ENCODE measurements at regions of chr9 and their contacts with region 1.

Region 1: DNA sequence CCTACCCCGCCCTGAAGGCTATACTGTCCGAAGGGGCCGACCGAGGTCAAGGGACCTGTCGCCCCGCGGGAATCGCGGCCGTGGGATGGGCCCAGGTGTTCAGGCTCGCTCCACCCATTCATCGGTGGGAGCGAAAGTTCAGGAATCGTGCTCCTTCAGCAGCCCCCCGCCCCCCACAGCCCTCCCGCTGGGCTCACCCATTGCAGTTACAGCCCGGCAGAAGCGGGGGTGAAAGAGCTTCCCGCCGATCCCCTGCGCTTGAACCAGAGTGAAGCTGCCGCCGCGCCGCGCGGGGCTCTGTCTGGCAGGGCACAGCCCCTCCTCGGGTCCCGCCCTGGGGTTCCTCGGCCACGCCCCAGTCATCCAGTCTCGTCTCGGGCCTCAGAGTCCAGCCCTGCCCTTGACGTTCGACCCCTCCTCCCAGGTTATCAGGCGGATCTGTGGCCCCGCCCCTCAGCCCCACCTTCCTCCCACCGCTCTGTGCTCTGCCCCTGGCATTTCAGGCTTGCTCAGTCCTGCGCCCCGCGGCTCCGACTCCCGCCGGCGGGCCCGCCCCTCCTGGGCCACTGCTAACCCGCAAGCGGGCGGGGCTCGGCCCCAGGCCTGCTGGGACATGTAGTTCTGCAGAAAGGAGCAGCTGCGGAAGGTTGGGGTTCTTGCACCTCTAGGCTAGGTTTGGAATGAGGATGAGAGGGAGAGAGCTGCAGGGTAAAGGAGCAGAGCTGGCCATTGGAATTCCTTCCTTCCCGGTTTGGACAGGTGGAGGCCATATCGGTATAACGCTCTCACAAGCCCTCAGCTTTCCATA is at the start of gene MYORG:
- DNase-seq: peak; percentile 85 to 96 (median 93)
- ATAC-seq: peak; percentile 86
- H3K4me3 ChIP-seq: peak within 1 kb of the TSS; percentile 82
- H3K4me3 Mint-ChIP-seq: peak within 1 kb of the TSS; percentile 78 to 94 (median 91)
- H3K27ac ChIP-seq: peak within 1 kb of the TSS; percentile 57
- H3K27ac Mint-ChIP-seq: peak within 1 kb of the TSS; percentile 52 to 92 (median 81)
- H3K4me1 ChIP-seq: peaks cover 16 to 22% of the 10 kb centered on the region in 2 donors
- H3K4me1 Mint-ChIP-seq: peaks cover 27 to 49% (median 45%) of the 10 kb centered on the region in 7 donors
- H3K27me3 ChIP-seq: no peaks in the 10 kb centered on the region
- H3K27me3 Mint-ChIP-seq: peaks cover 0 to 5% (median 0%) of the 10 kb centered on the region in 5 donors
- total RNA-seq, gene MYORG: 0.60 to 1.9 (median 0.78) TPM

Region 2: GRCh38 chr9:33816327-33817252 is 560.2 kb before region 1 on chr9 and contains the start of gene UBE2R2:
- CTCF ChIA-PET with region 1: no interaction called
- POLR2A ChIA-PET with region 1: no interaction called
- intact Hi-C with region 1: loop called (anchors 1 kb)
- DNase-seq: peak; percentile 81 to 94 (median 90)
- ATAC-seq: peak; percentile 86
- H3K4me3 ChIP-seq: peak within 1 kb of the TSS; percentile 88
- H3K4me3 Mint-ChIP-seq: peak within 1 kb of the TSS; percentile 83 to 98 (median 93)
- H3K27ac ChIP-seq: peak within 1 kb of the TSS; percentile 96
- H3K27ac Mint-ChIP-seq: peak within 1 kb of the TSS; percentile 91 to 99 (median 97)
- H3K4me1 ChIP-seq: peaks cover 19 to 21% of the 10 kb centered on the region in 2 donors
- H3K4me1 Mint-ChIP-seq: peaks cover 24 to 60% (median 54%) of the 10 kb centered on the region in 7 donors
- H3K27me3 ChIP-seq: no peaks in the 10 kb centered on the region
- H3K27me3 Mint-ChIP-seq: no peaks in the 10 kb centered on the region
- total RNA-seq, gene UBE2R2: 27.2 to 40.8 (median 32.0) TPM

Region 3: GRCh38 chr9:34178520-34179212 is 198.1 kb before region 1 on chr9 and contains the start of gene UBAP1:
- CTCF ChIA-PET with region 1: no interaction called
- POLR2A ChIA-PET with region 1: interaction called, 3 read pairs
- intact Hi-C with region 1: loop called (anchors 1 to 2 kb)
- DNase-seq: peak; percentile 83 to 97 (median 93)
- ATAC-seq: peak; percentile 99
- H3K4me3 ChIP-seq: peak within 1 kb of the TSS; percentile 93
- H3K4me3 Mint-ChIP-seq: peak within 1 kb of the TSS; percentile 93 to 100 (median 96)
- H3K27ac ChIP-seq: peak within 1 kb of the TSS; percentile 97
- H3K27ac Mint-ChIP-seq: peak within 1 kb of the TSS; percentile 94 to 99 (median 98)
- H3K4me1 ChIP-seq: peaks cover 0 to 8% of the 10 kb centered on the region in 2 donors
- H3K4me1 Mint-ChIP-seq: peaks cover 7 to 33% (median 21%) of the 10 kb centered on the region in 7 donors
- H3K27me3 ChIP-seq: no peaks in the 10 kb centered on the region
- H3K27me3 Mint-ChIP-seq: no peaks in the 10 kb centered on the region
- total RNA-seq, gene UBAP1: 31.1 to 39.9 (median 32.8) TPM

Region 4: GRCh38 chr9:34403554-34404380 is 27.0 kb after region 1 on chr9:
- CTCF ChIA-PET with region 1: interaction called, 9 read pairs
- POLR2A ChIA-PET with region 1: no interaction called
- intact Hi-C with region 1: loop called in 1 of 2 experiments (anchors 1 kb)
- DNase-seq: peak in 8 of 9 donors; percentile 22 to 56 (median 40)
- ATAC-seq: peak; percentile 82
- H3K4me3 ChIP-seq: no peak overlapping the region
- H3K4me3 Mint-ChIP-seq: no peak overlapping the region
- H3K27ac ChIP-seq: no peak overlapping the region
- H3K27ac Mint-ChIP-seq: no peak overlapping the region
- H3K4me1 ChIP-seq: no peaks in the 10 kb centered on the region
- H3K4me1 Mint-ChIP-seq: peaks cover 0 to 3% (median 0%) of the 10 kb centered on the region in 7 donors
- H3K27me3 ChIP-seq: no peaks in the 10 kb centered on the region
- H3K27me3 Mint-ChIP-seq: no peaks in the 10 kb centered on the region

Region 5: DNA sequence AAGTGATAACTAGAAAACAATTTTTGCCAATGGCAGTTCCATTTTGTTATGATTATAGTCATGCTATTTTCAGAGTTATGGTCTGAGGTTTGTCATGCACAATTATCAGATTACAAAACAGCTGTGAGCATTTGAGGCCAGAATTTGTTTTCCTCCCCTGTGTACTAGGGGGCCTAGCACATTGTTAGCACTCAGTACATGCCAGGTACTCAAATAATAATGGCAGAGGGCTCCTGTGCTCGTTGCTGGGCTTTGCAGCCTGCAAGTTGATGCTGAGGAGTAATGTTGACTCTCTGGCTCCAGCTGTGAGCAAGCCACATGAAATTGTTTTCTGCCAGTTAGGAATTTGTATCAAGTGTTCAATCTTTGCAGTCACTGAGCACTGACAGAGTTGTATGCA is 88.7 kb after region 1 on chr9:
- CTCF ChIA-PET with region 1: no interaction called
- POLR2A ChIA-PET with region 1: no interaction called
- intact Hi-C with region 1: no loop called
- DNase-seq: no peak
- ATAC-seq: no peak
- H3K4me3 ChIP-seq: no peak overlapping the region
- H3K4me3 Mint-ChIP-seq: no peak overlapping the region
- H3K27ac ChIP-seq: no peak overlapping the region
- H3K27ac Mint-ChIP-seq: no peak overlapping the region
- H3K4me1 ChIP-seq: no peaks in the 10 kb centered on the region
- H3K4me1 Mint-ChIP-seq: no peaks in the 10 kb centered on the region
- H3K27me3 ChIP-seq: no peaks in the 10 kb centered on the region
- H3K27me3 Mint-ChIP-seq: peaks cover 0 to 22% (median 5%) of the 10 kb centered on the region in 5 donors

Region 6: DNA sequence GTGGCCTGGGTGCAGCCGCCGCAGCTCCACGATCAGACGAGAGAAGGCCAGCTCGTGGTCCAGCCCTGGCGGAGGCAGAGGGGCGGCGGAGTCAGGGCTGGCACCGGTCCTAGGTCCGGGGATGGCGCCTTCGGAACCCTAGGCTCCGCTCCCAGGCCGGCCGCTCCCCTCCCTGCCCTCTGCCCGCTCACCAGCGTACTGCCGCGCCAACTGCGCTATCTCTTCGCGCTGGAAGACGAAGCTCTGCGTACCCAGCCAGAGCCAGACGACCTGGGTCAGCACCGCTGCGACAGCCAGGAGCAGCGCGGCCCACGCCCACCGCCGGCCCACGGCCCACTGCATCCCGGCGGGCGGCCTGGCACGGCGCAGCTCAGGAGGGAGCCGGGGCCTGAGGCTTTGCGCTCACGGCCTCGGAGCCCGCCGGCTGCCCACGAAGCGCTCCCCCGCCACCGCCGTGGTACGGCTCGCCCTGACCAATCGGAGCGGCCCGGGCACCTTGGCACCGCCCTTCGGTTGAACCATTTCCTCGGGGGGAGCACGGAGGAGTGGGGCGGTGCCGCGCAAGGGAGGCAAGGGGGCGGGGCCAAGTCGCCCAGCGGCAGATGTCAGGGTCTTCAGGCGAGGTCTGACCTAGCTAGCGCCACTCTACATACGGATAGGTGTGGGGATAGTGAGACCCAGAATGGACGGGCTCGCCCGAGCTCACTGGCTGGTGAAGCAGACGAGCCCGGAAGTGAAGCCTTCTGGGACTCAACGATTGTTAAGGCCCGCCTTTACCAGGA is 260.7 kb after region 1 on chr9 and contains the start of gene SIGMAR1:
- CTCF ChIA-PET with region 1: no interaction called
- POLR2A ChIA-PET with region 1: interaction called, 6 read pairs
- intact Hi-C with region 1: loop called in 1 of 2 experiments (anchors 1 kb)
- DNase-seq: peak; percentile 88 to 97 (median 95)
- ATAC-seq: peak; percentile 97
- H3K4me3 ChIP-seq: peak within 1 kb of the TSS; percentile 94
- H3K4me3 Mint-ChIP-seq: peak within 1 kb of the TSS; percentile 88 to 93 (median 90)
- H3K27ac ChIP-seq: peak within 1 kb of the TSS; percentile 70
- H3K27ac Mint-ChIP-seq: peak within 1 kb of the TSS; percentile 88 to 98 (median 95)
- H3K4me1 ChIP-seq: peaks cover 21 to 22% of the 10 kb centered on the region in 2 donors
- H3K4me1 Mint-ChIP-seq: peaks cover 26 to 45% (median 37%) of the 10 kb centered on the region in 7 donors
- H3K27me3 ChIP-seq: no peaks in the 10 kb centered on the region
- H3K27me3 Mint-ChIP-seq: no peaks in the 10 kb centered on the region
- total RNA-seq, gene SIGMAR1: 20.7 to 63.8 (median 46.0) TPM

Region 7: DNA sequence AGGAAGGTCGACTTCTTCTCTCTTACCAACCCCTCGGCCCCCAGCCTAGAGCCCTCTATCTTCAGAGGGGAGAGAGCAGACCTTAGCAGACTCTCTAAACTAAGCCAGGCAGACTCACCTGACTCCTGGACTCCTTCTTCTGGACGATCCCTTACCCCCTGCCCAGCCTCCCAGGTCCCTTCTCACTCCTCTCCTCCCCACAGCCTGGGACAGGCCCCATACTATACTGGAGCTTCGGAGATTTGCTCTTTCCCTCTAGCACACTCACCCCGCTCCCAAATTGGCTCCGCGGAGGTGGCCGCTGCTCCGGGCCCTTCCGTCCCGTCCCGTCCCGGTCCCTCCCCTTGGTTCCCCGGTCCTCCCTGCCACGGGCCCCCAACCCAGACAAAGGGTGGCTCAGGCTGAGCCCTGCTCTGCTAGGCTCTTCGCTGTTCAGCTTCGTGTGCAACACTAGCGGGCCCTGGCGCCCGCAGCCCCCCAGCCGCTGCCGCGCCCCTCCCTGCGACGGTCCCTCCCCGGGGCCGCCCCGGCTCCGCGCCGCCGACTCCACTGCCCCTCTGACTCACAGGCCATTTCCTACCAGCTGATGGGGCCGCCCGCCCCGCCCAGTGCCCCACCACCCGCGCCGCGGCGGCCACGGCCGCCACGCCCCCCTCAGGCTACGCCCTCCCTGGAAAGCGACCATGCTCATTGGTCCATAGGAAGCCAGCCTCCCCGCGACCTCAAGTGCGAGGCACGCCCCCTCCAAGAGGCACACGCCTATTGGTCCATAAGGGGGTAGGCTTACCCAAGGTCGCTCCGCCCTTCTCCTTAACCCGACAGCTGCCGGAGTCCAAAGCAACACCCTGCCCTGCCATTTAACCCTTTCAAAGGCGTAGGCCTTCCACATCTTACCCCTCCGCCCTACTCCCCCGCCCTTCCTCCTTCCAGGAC is 734.5 kb after region 1 on chr9:
- CTCF ChIA-PET with region 1: interaction called, 3 read pairs
- POLR2A ChIA-PET with region 1: no interaction called
- intact Hi-C with region 1: loop called (anchors 2 to 5 kb)
- DNase-seq: peak; percentile 77 to 96 (median 91)
- ATAC-seq: peak; percentile 86
- H3K4me3 ChIP-seq: peak overlapping the region; percentile 69
- H3K4me3 Mint-ChIP-seq: peak overlapping the region; percentile 55 to 87 (median 80)
- H3K27ac ChIP-seq: peak overlapping the region; percentile 71
- H3K27ac Mint-ChIP-seq: peak overlapping the region; percentile 62 to 94 (median 85)
- H3K4me1 ChIP-seq: peaks cover 36 to 37% of the 10 kb centered on the region in 2 donors
- H3K4me1 Mint-ChIP-seq: peaks cover 29 to 63% (median 58%) of the 10 kb centered on the region in 7 donors
- H3K27me3 ChIP-seq: no peaks in the 10 kb centered on the region
- H3K27me3 Mint-ChIP-seq: no peaks in the 10 kb centered on the region

Measured in naive thymus-derived CD4-positive, alpha-beta T cell (primary cell).